ENCODE measurements at regions of chr11 and their contacts with region 1.

Region 1: DNA sequence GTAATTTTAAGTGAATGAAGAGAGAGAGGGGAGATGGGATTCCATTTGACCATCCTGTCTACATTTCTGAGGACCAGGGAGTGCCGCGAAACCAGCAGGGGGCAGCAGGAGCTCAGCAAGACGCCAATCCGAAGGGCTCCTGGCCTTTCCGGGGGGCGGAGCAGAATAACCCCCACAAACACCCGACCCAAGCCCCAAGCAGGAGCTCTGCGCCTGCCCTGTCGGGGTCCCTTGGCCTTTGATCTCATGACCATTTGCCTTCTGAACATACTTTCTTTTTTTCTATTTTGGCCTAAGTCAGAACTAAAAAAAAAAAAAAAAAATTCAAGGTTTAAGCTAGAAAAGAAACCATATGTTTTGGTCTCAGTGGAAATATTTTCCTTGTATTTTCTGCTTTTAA is 21.9 kb upstream of the SCN2B start:
- DNase-seq: peak; percentile 68
- ATAC-seq: peak; percentile 10; the same call in 1 of the 3 replicates
- H3K4me3 ChIP-seq: no peak overlapping the region
- H3K27ac ChIP-seq: peak overlapping the region; percentile 16
- H3K4me1 ChIP-seq: peaks cover 88% of the 10 kb centered on the region
- H3K27me3 ChIP-seq: no peaks in the 10 kb centered on the region
- CTCF ChIP-seq: peak; percentile 94
- EP300 ChIP-seq: no peak
- POLR2A ChIP-seq: no peak
- RAD21 ChIP-seq: peak; percentile 90

Region 2: DNA sequence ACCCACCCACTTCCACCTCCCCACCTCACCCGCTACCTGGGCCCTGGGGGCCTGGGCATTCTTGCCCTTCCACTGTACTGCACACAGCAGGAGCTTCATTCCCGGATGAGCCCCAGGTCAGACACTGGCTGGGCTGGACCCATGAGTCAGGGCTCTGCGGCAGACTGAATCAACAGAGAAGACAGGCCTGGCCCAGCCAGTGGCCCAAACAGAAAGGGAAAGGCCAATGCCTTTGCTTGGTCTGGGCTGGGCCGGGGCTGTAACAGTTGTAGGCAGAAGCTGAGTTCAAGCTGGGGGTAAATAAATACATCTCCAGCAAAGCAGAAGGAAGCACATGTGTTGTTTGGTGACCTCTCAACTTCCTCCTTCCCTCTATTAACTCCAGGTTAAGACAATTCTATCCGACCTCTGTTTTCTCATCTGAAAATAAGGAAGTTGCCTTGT is 109.9 kb before region 1 on chr11:
- CTCF ChIA-PET with region 1: no interaction called
- POLR2A ChIA-PET with region 1: no interaction called
- in situ Hi-C with region 1: no loop called
- intact Hi-C with region 1: no loop called
- DNase-seq: peak; percentile 25
- ATAC-seq: peak; percentile 71
- H3K4me3 ChIP-seq: no peak overlapping the region
- H3K27ac ChIP-seq: no peak overlapping the region
- H3K4me1 ChIP-seq: peaks cover 76% of the 10 kb centered on the region
- H3K27me3 ChIP-seq: peaks cover 0 to 7% of the 10 kb centered on the region in 2 experiments; a peak in 1 of 5 replicates
- CTCF ChIP-seq: no peak
- EP300 ChIP-seq: no peak
- POLR2A ChIP-seq: no peak
- RAD21 ChIP-seq: no peak

Region 3: GRCh38 chr11:118109231-118109630 is 89.1 kb before region 1 on chr11:
- CTCF ChIA-PET with region 1: no interaction called
- POLR2A ChIA-PET with region 1: no interaction called
- in situ Hi-C with region 1: no loop called
- intact Hi-C with region 1: no loop called
- DNase-seq: no peak
- ATAC-seq: no peak
- H3K4me3 ChIP-seq: no peak overlapping the region
- H3K27ac ChIP-seq: no peak overlapping the region
- H3K4me1 ChIP-seq: peaks cover 10% of the 10 kb centered on the region
- H3K27me3 ChIP-seq: peaks cover 5 to 31% of the 10 kb centered on the region in 2 experiments
- CTCF ChIP-seq: no peak
- EP300 ChIP-seq: no peak
- POLR2A ChIP-seq: no peak
- RAD21 ChIP-seq: no peak

Region 4: GRCh38 chr11:118171269-118172062 is 26.9 kb before region 1 on chr11:
- CTCF ChIA-PET with region 1: no interaction called
- POLR2A ChIA-PET with region 1: interaction called, 10 read pairs
- in situ Hi-C with region 1: no loop called
- intact Hi-C with region 1: no loop called
- DNase-seq: peak; percentile 56
- ATAC-seq: peak; percentile 79
- H3K4me3 ChIP-seq: no peak overlapping the region; a peak in 1 of 6 replicates
- H3K27ac ChIP-seq: no peak overlapping the region
- H3K4me1 ChIP-seq: peaks cover 34% of the 10 kb centered on the region
- H3K27me3 ChIP-seq: peaks cover 4 to 59% of the 10 kb centered on the region in 2 experiments
- CTCF ChIP-seq: peak; percentile 97
- EP300 ChIP-seq: no peak
- POLR2A ChIP-seq: no peak
- RAD21 ChIP-seq: peak; percentile 69

Region 5: GRCh38 chr11:118247047-118247446 is 48.7 kb after region 1 on chr11:
- CTCF ChIA-PET with region 1: no interaction called
- POLR2A ChIA-PET with region 1: interaction called, 14 read pairs
- in situ Hi-C with region 1: loop called (anchors 5 kb)
- intact Hi-C with region 1: loop called (anchors 2 kb)
- DNase-seq: peak; percentile 60
- ATAC-seq: peak; percentile 73
- H3K4me3 ChIP-seq: no peak overlapping the region
- H3K27ac ChIP-seq: no peak overlapping the region
- H3K4me1 ChIP-seq: peaks cover 49% of the 10 kb centered on the region
- H3K27me3 ChIP-seq: no peaks in the 10 kb centered on the region; a peak in 1 of 5 replicates
- CTCF ChIP-seq: peak; percentile 37
- EP300 ChIP-seq: no peak
- POLR2A ChIP-seq: no peak
- RAD21 ChIP-seq: 0 out of 2 replicates have a peak, but pooled peaks have one; percentile 22

Region 6: GRCh38 chr11:118263695-118264567 is 65.6 kb after region 1 on chr11 and contains the start of gene MPZL2:
- CTCF ChIA-PET with region 1: no interaction called
- POLR2A ChIA-PET with region 1: interaction called, 7 read pairs
- in situ Hi-C with region 1: no loop called
- intact Hi-C with region 1: loop called (anchors 5 kb)
- DNase-seq: peak; percentile 81
- ATAC-seq: peak; percentile 97
- H3K4me3 ChIP-seq: peak within 1 kb of the TSS; percentile 58 to 77 (median 66)
- H3K27ac ChIP-seq: peak within 1 kb of the TSS; percentile 43
- H3K4me1 ChIP-seq: peaks cover 43% of the 10 kb centered on the region
- H3K27me3 ChIP-seq: peaks cover 0 to 22% of the 10 kb centered on the region in 2 experiments; a peak in 4 of 5 replicates
- CTCF ChIP-seq: peak; percentile 59
- EP300 ChIP-seq: peak in 1 of 2 experiments; percentile 18; a peak in 1 of 4 replicates
- POLR2A ChIP-seq: peak; percentile 39 to 73; a peak in 3 of 4 replicates
- RAD21 ChIP-seq: no peak
- total RNA-seq, gene MPZL2: 16.6 and 27.9 TPM in 2 replicates

Region 7: DNA sequence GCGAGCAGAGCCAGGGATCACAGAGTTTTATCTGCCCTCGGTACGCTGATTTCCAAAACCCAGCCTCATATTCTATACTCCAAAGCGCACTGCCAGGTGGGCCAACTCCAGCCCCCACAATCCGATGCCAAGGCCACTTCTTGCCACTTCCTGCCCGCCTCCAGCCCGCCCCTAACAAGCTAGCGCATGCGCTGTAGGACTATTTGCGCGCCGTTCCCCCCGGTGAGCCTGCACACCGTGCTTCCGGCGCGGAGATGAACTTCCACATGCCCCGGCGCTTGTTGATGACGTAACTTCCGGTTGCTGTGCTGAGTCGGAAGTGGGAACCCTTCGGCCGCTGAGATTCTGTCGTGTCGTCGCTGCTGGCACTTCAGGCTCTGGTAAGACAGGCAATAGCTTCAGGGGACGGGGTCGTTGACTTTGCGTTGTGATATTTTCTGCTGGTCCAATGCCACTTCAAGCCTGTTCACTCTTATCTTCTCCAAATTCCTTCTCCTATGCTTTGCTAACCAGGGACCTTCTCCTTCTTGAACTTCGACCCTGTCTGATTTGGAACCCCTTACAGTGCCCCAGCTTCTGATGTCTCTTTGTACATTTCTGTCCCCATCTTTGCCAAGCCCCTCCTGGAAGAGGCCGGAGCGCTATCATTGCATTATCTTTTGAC is 161.1 kb after region 1 on chr11 and contains the start of gene UBE4A:
- CTCF ChIA-PET with region 1: no interaction called
- POLR2A ChIA-PET with region 1: interaction called, 5 read pairs
- in situ Hi-C with region 1: loop called (anchors 10 kb)
- intact Hi-C with region 1: loop called (anchors 2 kb)
- DNase-seq: peak; percentile 88
- ATAC-seq: peak; percentile 95
- H3K4me3 ChIP-seq: peak within 1 kb of the TSS; percentile 72 to 89 (median 89)
- H3K27ac ChIP-seq: peak within 1 kb of the TSS; percentile 74
- H3K4me1 ChIP-seq: peaks cover 29% of the 10 kb centered on the region
- H3K27me3 ChIP-seq: no peaks in the 10 kb centered on the region; a peak in 1 of 5 replicates
- CTCF ChIP-seq: no peak
- EP300 ChIP-seq: peak in 1 of 2 experiments; percentile 33; a peak in 1 of 4 replicates
- POLR2A ChIP-seq: peak; percentile 92 to 94
- RAD21 ChIP-seq: peak; percentile 20; the same call in 1 of the 2 replicates
- total RNA-seq, gene UBE4A: 24.8 and 32.7 TPM in 2 replicates

Measured in HepG2 (cell line).